ENCODE measurements at regions of chr9 and their contacts with region 1.

Region 1: DNA sequence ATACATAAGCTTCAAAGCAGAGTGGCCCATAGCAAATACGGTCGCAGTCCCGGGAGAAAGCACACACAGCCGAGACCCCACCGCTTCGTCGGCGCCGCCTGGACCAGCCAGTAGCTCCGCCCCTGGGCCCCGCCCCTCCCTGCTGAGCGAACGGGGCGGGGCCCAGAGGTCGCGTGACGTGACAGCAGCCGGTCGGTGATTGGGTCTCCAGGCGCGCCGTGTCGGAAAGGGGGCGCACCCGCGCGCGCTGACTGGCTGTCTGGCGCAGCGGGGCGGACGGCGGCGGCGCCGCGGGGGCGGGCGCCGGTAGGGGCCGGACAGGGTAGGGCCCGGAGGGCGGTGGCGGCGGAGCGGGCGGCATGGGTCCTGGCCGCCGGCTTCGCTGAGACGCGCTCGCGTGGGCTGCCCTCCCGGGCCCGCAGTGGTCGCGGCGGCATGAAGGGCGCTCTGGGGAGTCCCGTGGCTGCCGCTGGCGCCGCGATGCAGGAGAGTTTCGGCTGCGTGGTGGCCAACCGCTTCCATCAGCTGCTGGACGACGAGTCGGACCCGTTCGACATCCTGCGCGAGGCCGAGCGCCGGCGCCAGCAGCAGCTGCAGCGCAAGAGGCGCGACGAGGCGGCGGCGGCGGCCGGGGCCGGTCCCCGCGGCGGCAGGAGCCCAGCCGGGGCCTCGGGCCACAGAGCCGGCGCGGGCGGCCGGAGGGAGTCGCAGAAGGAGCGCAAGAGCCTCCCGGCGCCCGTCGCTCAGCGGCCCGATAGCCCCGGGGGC is at the start of gene HABP4:
- DNase-seq: peak; percentile 96 to 98
- ATAC-seq: peak; percentile 99 to 100 (median 99)
- H3K4me3 ChIP-seq: peak within 1 kb of the TSS; percentile 68 to 97 (median 84)
- H3K27ac ChIP-seq: peak within 1 kb of the TSS; percentile 53 to 94 (median 84)
- H3K4me1 ChIP-seq: peaks cover 0 to 33% (median 11%) of the 10 kb centered on the region in 9 donors
- H3K27me3 ChIP-seq: peaks cover 0 to 30% (median 0%) of the 10 kb centered on the region in 7 donors
- CTCF ChIP-seq: peak in 1 of 9 donors; percentile 40
- total RNA-seq, gene HABP4: 20.8 to 30.4 (median 25.9) TPM

Region 2: GRCh38 chr9:95753762-95754465 is 696.1 kb before region 1 on chr9:
- intact Hi-C with region 1: no loop called
- DNase-seq: peak; percentile 34 to 42
- ATAC-seq: peak; percentile 55 to 80 (median 69)
- H3K4me3 ChIP-seq: no peak overlapping the region
- H3K27ac ChIP-seq: peak overlapping the region in 1 of 10 donors; percentile 39
- H3K4me1 ChIP-seq: peaks cover 5 to 46% (median 26%) of the 10 kb centered on the region in 9 donors
- H3K27me3 ChIP-seq: peaks cover 0 to 30% (median 11%) of the 10 kb centered on the region in 7 donors
- CTCF ChIP-seq: no peak

Region 3: GRCh38 chr9:96232539-96233241 is 217.3 kb before region 1 on chr9:
- intact Hi-C with region 1: no loop called
- DNase-seq: peak; percentile 61 to 67
- ATAC-seq: peak; percentile 77 to 92 (median 88)
- H3K4me3 ChIP-seq: peak overlapping the region in 2 of 10 donors; percentile 12 to 16
- H3K27ac ChIP-seq: peak overlapping the region in 8 of 10 donors; percentile 0 to 78 (median 44)
- H3K4me1 ChIP-seq: peaks cover 3 to 21% (median 13%) of the 10 kb centered on the region in 9 donors
- H3K27me3 ChIP-seq: peaks cover 0 to 4% (median 0%) of the 10 kb centered on the region in 7 donors
- CTCF ChIP-seq: peak; percentile 70 to 92 (median 88)

Region 4: DNA sequence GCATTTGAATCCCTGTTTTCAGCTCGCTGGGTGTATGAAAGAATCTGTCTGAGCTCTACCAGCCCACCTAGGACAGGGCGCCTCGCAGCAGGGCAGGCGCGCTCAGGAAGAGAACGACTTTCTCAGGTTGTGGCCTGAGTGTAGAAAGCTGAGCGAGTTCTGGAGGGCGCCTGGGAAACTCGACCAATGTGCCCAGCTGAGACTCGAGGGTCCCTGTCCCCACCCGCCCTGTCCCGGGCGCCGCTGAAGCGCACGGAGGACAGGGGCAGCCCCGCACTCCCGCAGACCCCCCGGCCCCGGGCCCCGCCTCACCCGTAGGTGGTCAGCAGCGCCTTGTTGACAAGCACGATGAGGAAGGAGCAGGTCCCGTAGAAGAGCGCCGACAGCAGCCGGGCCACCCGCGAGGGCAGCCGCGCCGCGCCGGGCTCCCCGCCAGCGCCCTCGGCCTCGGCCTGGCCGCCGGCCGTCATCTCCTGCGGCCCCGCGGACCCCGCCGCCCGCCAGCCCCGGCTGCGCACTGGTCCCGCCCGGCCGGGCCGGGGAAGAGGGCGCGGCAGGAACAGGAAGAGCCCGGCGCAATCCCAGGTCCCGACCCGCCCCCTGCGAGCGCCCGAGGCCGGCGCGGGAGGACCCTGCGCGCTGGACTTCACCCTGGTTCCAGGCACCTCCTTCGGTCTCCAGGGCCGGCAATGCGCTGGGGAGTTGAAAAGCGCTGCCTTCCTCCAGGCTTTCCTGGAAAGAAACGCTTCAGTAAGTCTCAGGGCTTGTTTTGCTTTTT is 66.7 kb before region 1 on chr9 and contains the start of gene SLC35D2:
- intact Hi-C with region 1: loop called in 1 of 10 experiments (anchors 5 kb)
- DNase-seq: peak; percentile 65 to 76
- ATAC-seq: peak; percentile 92 to 98 (median 96)
- H3K4me3 ChIP-seq: peak within 1 kb of the TSS; percentile 59 to 88 (median 80)
- H3K27ac ChIP-seq: peak within 1 kb of the TSS; percentile 76 to 93 (median 88)
- H3K4me1 ChIP-seq: peaks cover 3 to 41% (median 20%) of the 10 kb centered on the region in 9 donors
- H3K27me3 ChIP-seq: no peaks in the 10 kb centered on the region
- CTCF ChIP-seq: no peak
- total RNA-seq, gene SLC35D2: 10.8 to 20.8 (median 13.2) TPM

Region 5: GRCh38 chr9:96398582-96399324 is 51.3 kb before region 1 on chr9:
- intact Hi-C with region 1: no loop called
- DNase-seq: no peak
- ATAC-seq: no peak
- H3K4me3 ChIP-seq: no peak overlapping the region
- H3K27ac ChIP-seq: peak overlapping the region in 1 of 10 donors; percentile 51
- H3K4me1 ChIP-seq: peaks cover 0 to 8% (median 0%) of the 10 kb centered on the region in 9 donors
- H3K27me3 ChIP-seq: no peaks in the 10 kb centered on the region
- CTCF ChIP-seq: no peak

Region 6: GRCh38 chr9:96619491-96620154 is 169.6 kb after region 1 on chr9 and contains the start of gene CDC14B:
- intact Hi-C with region 1: loop called in 1 of 10 experiments (anchors 5 kb)
- DNase-seq: peak; percentile 87 to 89
- ATAC-seq: peak; percentile 71 to 85 (median 79)
- H3K4me3 ChIP-seq: peak within 1 kb of the TSS; percentile 46 to 91 (median 68)
- H3K27ac ChIP-seq: peak within 1 kb of the TSS; percentile 65 to 92 (median 84)
- H3K4me1 ChIP-seq: peaks cover 0 to 15% (median 4%) of the 10 kb centered on the region in 9 donors
- H3K27me3 ChIP-seq: peaks cover 0 to 54% (median 0%) of the 10 kb centered on the region in 7 donors
- CTCF ChIP-seq: peak in 1 of 9 donors; percentile 32
- total RNA-seq, gene CDC14B: 17.0 to 30.8 (median 27.0) TPM

Region 7: DNA sequence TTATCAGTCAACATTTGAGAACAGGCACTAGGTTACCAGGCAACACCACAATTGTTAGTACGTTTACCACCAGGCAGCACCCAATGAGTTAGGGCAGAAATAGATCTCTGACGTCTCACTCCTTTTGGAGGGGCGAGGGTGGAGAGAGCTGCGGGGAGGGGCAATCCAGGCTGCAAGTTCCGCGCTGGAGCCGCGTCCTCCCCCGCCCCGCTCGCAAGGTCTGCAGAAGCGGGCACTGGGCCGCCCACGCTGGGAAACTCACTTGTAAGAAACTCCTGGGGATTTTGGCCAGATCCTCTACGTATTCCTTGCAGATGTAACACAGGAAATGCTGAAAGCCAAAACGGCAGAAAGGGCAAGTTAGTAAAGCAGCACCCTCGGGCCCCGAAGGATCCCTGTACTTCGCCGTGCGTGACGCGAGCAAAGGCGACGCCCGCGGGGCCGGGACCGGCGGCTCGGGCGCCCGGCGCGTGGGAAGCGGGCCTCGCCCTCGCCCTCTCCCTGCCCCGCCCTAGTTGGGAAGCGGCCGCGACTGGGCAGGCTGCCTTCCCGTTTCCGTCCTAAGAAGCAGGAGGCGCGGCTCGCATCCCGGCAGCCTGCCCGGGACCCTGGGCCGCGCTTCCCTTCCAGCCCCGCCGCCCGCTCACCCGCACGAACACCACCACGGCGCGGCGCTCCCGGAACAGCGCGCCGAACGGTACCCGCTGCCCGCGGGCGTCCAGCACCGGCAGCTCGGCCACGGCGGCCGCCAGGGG is 204.6 kb after region 1 on chr9:
- intact Hi-C with region 1: loop called in 5 of 10 experiments (anchors 5 to 10 kb)
- DNase-seq: peak; percentile 89 to 92
- ATAC-seq: peak; percentile 89 to 96 (median 94)
- H3K4me3 ChIP-seq: peak overlapping the region; percentile 49 to 74 (median 66)
- H3K27ac ChIP-seq: peak overlapping the region; percentile 95 to 100 (median 99)
- H3K4me1 ChIP-seq: peaks cover 0 to 41% (median 24%) of the 10 kb centered on the region in 9 donors
- H3K27me3 ChIP-seq: no peaks in the 10 kb centered on the region
- CTCF ChIP-seq: peak in 3 of 9 donors; percentile 8 to 44 (median 43)